Activated T-helper 2 cell treated with anti-CD3 and anti-CD28 coated beads, Interferon-gamma antibody, Interleukin-2, Interleukin-4, amounts not matched to agents 10 μg/mL and 5 μg/mL and 100 μg/mL, durations not matched to agents 14 hours and 24 hours and 36 hours (primary cell): ENCODE measurements at regions of chr1 and their contacts with region 1.

Region 1: DNA sequence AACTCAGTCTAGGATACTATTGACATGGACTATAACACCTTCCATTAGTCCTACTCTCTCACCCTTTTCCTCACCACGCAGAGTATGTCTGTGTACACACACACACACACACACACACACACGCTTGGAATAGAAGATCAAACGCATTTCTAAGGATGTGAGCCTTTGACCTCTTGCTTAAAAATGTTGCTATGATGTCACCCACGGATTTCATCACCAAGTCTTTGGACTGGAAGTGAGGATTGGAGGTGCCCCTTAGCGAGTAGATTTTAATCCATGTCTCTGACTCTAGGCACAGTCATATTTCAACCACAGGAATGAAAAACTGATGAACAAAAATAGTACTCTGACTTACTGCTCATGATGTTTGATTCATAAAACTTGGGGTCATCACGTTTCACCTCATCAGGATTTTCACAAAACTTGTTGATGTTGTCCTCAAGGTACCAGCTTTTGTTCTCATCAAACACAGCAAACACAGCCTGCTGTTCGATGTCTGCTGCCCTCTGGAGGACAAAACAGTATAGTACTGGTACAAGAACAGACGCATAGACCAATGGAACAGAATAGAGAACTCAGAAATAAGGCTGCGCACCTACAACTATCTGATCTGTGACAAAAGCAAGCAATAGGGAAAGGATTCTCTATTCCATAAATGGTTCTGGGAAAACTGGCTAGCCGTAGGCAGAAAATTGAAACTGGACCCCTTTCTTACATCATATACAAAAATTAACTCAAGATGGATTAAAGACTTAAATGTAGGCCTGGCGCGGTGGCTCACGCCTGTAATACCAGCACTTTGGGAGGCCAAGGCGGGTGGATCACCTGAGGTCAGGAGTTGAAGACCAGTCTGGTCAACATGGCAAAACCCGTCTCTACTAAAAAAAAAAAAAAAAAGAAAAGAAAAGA is 39.9 kb downstream of the F5 start:
- DNase-seq: peak; percentile 36
- H3K4me3 Mint-ChIP-seq: no peak overlapping the region
- H3K27ac Mint-ChIP-seq: peak overlapping the region; percentile 28
- H3K4me1 Mint-ChIP-seq: peaks cover 9% of the 10 kb centered on the region
- H3K27me3 Mint-ChIP-seq: no peaks in the 10 kb centered on the region

Region 2: GRCh38 chr1:168603501-168604110 is 942.7 kb before region 1 on chr1:
- intact Hi-C with region 1: loop called (anchors 1 kb)
- DNase-seq: peak; percentile 51
- H3K4me3 Mint-ChIP-seq: no peak overlapping the region
- H3K27ac Mint-ChIP-seq: no peak overlapping the region
- H3K4me1 Mint-ChIP-seq: peaks cover 5% of the 10 kb centered on the region
- H3K27me3 Mint-ChIP-seq: peaks cover 11% of the 10 kb centered on the region

Region 3: GRCh38 chr1:169466259-169467230 is 79.8 kb before region 1 on chr1:
- intact Hi-C with region 1: loop called (anchors 1 kb)
- DNase-seq: no peak
- H3K4me3 Mint-ChIP-seq: no peak overlapping the region
- H3K27ac Mint-ChIP-seq: no peak overlapping the region
- H3K4me1 Mint-ChIP-seq: peaks cover 6% of the 10 kb centered on the region
- H3K27me3 Mint-ChIP-seq: no peaks in the 10 kb centered on the region

Region 4: DNA sequence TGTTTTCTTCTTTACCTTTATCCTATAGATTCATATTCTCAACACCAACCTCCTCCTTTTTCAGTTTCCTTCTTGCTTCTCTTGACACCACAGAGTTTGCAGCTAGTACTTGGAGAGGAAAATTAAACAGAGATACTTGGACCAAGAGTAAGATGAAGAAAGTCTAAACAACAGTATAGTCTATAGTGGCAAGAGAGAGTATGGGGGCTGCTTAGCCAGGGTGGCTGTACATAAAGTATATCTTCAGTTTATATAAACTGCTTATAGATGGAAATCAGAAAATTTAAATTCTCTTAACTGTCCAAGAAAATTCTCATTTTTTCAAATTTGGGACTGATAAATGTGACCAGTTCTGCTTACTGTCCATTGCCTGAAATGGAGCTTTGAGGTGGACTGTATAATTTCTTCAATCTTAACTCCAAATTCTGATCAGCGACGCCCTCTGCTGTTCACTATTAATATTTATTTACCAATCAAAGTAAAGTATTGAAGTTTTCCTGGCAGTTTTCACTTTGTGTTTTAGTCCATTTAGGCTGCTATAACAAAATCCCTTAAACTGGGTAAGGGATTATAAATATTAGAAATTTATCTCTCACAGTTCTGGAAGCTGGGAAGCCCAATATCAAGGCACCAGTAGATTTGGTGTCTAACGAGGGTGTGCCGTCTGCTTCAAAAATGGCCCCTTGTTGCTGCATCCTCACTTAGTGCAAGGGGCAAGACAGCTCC is 263.2 kb after region 1 on chr1:
- intact Hi-C with region 1: loop called (anchors 1 kb)
- DNase-seq: no peak
- H3K4me3 Mint-ChIP-seq: no peak overlapping the region
- H3K27ac Mint-ChIP-seq: no peak overlapping the region
- H3K4me1 Mint-ChIP-seq: peaks cover 9% of the 10 kb centered on the region
- H3K27me3 Mint-ChIP-seq: no peaks in the 10 kb centered on the region